SK-N-SH (cell line): ENCODE measurements at regions of chr7 and their contacts with region 1.

Region 1: DNA sequence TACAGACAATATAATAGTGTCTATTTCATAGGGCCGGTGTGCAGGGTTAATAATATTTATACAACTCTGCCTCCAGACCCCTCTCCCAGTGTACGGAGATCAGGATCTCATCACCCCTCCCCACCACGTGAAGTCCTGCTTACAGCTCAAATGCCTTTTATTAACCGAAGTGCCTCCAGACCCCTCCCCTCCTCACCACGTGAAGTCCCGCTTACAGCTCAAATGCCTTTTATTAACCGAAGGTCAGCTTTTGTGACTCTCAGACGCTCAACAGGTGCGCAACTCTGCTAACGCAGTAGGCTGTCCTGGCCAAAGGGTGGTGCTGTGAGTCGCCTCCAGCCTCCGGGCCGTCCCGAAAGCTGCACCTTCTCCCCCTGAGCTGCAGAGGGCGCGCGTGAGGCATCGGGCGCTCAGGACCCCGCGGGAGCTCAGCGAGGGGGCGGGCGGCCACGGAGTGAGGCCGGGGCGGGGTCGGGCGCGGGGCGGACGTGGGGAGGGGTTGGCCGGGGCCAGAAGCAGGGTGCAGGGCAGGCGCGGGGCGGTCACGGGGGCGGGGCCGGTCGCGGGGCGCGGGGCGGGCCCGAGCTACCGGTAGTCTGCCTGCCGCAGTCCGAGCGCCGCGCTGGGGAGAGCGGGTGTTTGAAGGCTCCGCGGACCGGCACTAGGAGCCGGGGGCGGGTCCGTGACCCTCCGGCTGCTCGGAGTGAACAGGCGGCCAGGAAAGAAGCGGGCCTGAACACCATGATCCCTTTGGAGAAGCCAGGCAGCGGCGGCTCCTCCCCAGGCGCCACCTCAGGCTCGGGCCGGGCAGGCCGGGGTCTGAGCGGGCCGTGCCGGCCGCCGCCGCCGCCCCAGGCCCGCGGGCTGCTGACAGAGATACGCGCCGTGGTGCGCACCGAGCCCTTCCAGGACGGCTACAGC is at the start of gene STK17A:
- DNase-seq: peak; percentile 99
- H3K4me3 ChIP-seq: peak within 1 kb of the TSS; percentile 70 to 98
- H3K27ac ChIP-seq: peak within 1 kb of the TSS; percentile 83 to 88
- H3K4me1 ChIP-seq: peaks cover 15 to 20% of the 10 kb centered on the region in 2 experiments; a peak in 3 of 4 replicates
- H3K27me3 ChIP-seq: no peaks in the 10 kb centered on the region
- CTCF ChIP-seq: peak; percentile 100
- EP300 ChIP-seq: peak in 1 of 2 experiments; percentile 3; a peak in 1 of 4 replicates
- RAD21 ChIP-seq: peak; percentile 96
- polyA plus RNA-seq, gene STK17A: 47.8 and 52.0 TPM in 2 replicates

Region 2: GRCh38 chr7:42690794-42691639 is 891.7 kb before region 1 on chr7:
- CTCF ChIA-PET with region 1: no interaction called
- POLR2A ChIA-PET with region 1: no interaction called
- DNase-seq: peak; percentile 17
- H3K4me3 ChIP-seq: no peak overlapping the region; a peak in 1 of 4 replicates
- H3K27ac ChIP-seq: no peak overlapping the region
- H3K4me1 ChIP-seq: no peaks in the 10 kb centered on the region
- H3K27me3 ChIP-seq: peaks cover 55% of the 10 kb centered on the region
- CTCF ChIP-seq: peak; percentile 75
- EP300 ChIP-seq: no peak
- RAD21 ChIP-seq: peak; percentile 62

Region 3: GRCh38 chr7:43211276-43211675 is 371.5 kb before region 1 on chr7:
- CTCF ChIA-PET with region 1: no interaction called
- POLR2A ChIA-PET with region 1: no interaction called
- DNase-seq: no peak
- H3K4me3 ChIP-seq: no peak overlapping the region
- H3K27ac ChIP-seq: no peak overlapping the region
- H3K4me1 ChIP-seq: no peaks in the 10 kb centered on the region
- H3K27me3 ChIP-seq: peaks cover 28% of the 10 kb centered on the region
- CTCF ChIP-seq: peak; percentile 27; the same call in 1 of the 2 replicates
- EP300 ChIP-seq: no peak
- RAD21 ChIP-seq: no peak

Region 4: DNA sequence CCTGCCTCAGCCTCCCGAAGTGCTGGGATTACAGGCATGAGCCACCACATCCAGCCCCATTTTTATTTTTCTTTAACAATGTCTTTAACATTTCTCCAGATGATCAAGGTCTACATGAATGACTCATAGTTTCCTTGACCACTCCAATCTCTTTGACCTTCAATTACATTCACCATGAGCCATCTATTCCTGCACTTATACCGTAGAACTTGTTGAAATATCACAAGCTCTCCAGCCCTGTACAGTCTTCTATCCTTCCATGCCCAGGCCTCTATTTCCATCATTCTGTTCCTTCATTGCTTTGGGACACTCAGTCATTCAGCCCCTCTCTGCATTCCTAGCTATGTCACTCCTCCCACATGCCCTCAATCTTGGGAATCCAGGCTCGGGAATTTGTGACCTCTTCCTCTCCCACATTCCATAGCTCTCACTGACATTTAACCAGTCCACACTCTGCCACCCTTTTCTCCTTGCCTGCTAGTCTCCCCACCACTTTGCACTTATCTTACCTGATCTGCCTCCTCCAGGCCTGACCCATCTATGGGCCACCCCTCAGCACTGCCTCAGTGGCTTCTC is 151.7 kb before region 1 on chr7:
- CTCF ChIA-PET with region 1: interaction called, 10 read pairs
- POLR2A ChIA-PET with region 1: no interaction called
- DNase-seq: no peak
- H3K4me3 ChIP-seq: no peak overlapping the region
- H3K27ac ChIP-seq: no peak overlapping the region
- H3K4me1 ChIP-seq: no peaks in the 10 kb centered on the region
- H3K27me3 ChIP-seq: no peaks in the 10 kb centered on the region; the same call in 1 of the 2 replicates
- CTCF ChIP-seq: no peak
- EP300 ChIP-seq: no peak
- RAD21 ChIP-seq: no peak

Region 5: GRCh38 chr7:43528576-43529354 is 54.0 kb before region 1 on chr7:
- CTCF ChIA-PET with region 1: interaction called, 38 read pairs
- POLR2A ChIA-PET with region 1: interaction called, 3 read pairs
- DNase-seq: no peak
- H3K4me3 ChIP-seq: no peak overlapping the region
- H3K27ac ChIP-seq: no peak overlapping the region; a peak in 1 of 4 replicates
- H3K4me1 ChIP-seq: peaks cover 4 to 39% of the 10 kb centered on the region in 2 experiments; a peak in 2 of 4 replicates
- H3K27me3 ChIP-seq: peaks cover 40% of the 10 kb centered on the region
- CTCF ChIP-seq: no peak
- EP300 ChIP-seq: no peak
- RAD21 ChIP-seq: no peak

Region 6: GRCh38 chr7:43618073-43618472 is 35.3 kb after region 1 on chr7:
- CTCF ChIA-PET with region 1: interaction called, 20 read pairs
- POLR2A ChIA-PET with region 1: no interaction called
- DNase-seq: no peak
- H3K4me3 ChIP-seq: no peak overlapping the region
- H3K27ac ChIP-seq: peak overlapping the region in 1 of 2 experiments; percentile 23; a peak in 1 of 4 replicates
- H3K4me1 ChIP-seq: peaks cover 0 to 40% of the 10 kb centered on the region in 2 experiments; a peak in 3 of 4 replicates
- H3K27me3 ChIP-seq: no peaks in the 10 kb centered on the region
- CTCF ChIP-seq: no peak
- EP300 ChIP-seq: no peak
- RAD21 ChIP-seq: no peak

Region 7: GRCh38 chr7:43693687-43694398 is 111.1 kb after region 1 on chr7:
- CTCF ChIA-PET with region 1: interaction called, 346 read pairs
- POLR2A ChIA-PET with region 1: no interaction called
- DNase-seq: no peak
- H3K4me3 ChIP-seq: peak overlapping the region in 1 of 2 experiments; percentile 24; a peak in 3 of 4 replicates
- H3K27ac ChIP-seq: peak overlapping the region; percentile 36 to 96; a peak in 3 of 4 replicates
- H3K4me1 ChIP-seq: peaks cover 5 to 44% of the 10 kb centered on the region in 2 experiments
- H3K27me3 ChIP-seq: no peaks in the 10 kb centered on the region
- CTCF ChIP-seq: no peak
- EP300 ChIP-seq: peak in 1 of 2 experiments; percentile 83; a peak in 2 of 4 replicates
- RAD21 ChIP-seq: no peak

Region 8: GRCh38 chr7:43758029-43758821 is 175.5 kb after region 1 on chr7 and contains the start of gene BLVRA:
- CTCF ChIA-PET with region 1: interaction called, 13 read pairs
- POLR2A ChIA-PET with region 1: interaction called, 6 read pairs
- DNase-seq: peak; percentile 100
- H3K4me3 ChIP-seq: peak within 1 kb of the TSS; percentile 74 to 83
- H3K27ac ChIP-seq: peak within 1 kb of the TSS; percentile 66 to 75
- H3K4me1 ChIP-seq: peaks cover 4 to 14% of the 10 kb centered on the region in 2 experiments; a peak in 2 of 4 replicates
- H3K27me3 ChIP-seq: no peaks in the 10 kb centered on the region
- CTCF ChIP-seq: no peak
- EP300 ChIP-seq: no peak
- RAD21 ChIP-seq: no peak
- polyA plus RNA-seq, gene BLVRA: 111 and 123 TPM in 2 replicates

Region 9: DNA sequence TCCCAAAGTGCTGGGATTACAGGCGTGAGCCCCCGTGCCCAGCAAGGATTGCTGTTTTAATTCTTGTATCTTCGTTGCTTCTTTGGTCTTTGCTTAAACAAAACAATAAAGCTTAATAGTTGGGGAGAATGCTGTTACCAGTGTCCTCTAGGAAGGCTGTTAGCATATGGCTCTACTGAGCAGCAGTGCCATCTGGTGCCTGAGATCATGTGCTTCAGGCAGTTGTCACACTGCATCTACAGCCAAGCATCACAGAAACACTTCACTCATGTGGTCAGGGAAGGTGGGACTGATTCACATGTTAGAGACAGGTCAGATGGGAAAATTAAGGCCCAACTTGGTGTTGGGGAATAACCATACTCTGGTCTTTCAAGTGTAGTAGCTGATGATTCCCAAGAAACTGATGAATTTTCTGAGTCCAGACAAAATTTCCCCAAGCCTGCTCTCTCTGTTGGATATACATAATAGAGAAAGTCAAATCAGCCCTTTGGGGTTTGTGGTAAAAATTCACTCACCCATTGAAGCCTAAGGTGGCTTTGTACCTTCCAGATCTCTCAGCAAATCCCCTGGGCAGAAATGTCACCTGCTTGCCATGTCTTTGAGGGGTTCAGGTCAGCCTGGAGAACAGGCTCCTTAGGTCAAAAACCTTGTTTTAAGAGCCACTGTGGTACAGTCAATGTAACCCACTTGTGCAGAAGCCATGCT is 371.9 kb after region 1 on chr7:
- CTCF ChIA-PET with region 1: interaction called, 17 read pairs
- POLR2A ChIA-PET with region 1: no interaction called
- DNase-seq: peak; percentile 81
- H3K4me3 ChIP-seq: no peak overlapping the region
- H3K27ac ChIP-seq: no peak overlapping the region
- H3K4me1 ChIP-seq: no peaks in the 10 kb centered on the region
- H3K27me3 ChIP-seq: no peaks in the 10 kb centered on the region
- CTCF ChIP-seq: peak; percentile 70
- EP300 ChIP-seq: peak in 1 of 2 experiments; percentile 38; a peak in 1 of 4 replicates
- RAD21 ChIP-seq: peak; percentile 99